PC-9 (cell line): ENCODE measurements at regions of chr12 and their contacts with region 1.

Region 1: GRCh38 chr12:6944381-6945186 is 762 bp downstream of the C12orf57 start:
- DNase-seq: peak; percentile 90 to 97
- H3K4me3 ChIP-seq: peak overlapping the region; percentile 67
- H3K27ac ChIP-seq: peak overlapping the region; percentile 94
- H3K4me1 ChIP-seq: peaks cover 20% of the 10 kb centered on the region
- H3K27me3 ChIP-seq: no peaks in the 10 kb centered on the region
- CTCF ChIP-seq: peak; percentile 88

Region 2: DNA sequence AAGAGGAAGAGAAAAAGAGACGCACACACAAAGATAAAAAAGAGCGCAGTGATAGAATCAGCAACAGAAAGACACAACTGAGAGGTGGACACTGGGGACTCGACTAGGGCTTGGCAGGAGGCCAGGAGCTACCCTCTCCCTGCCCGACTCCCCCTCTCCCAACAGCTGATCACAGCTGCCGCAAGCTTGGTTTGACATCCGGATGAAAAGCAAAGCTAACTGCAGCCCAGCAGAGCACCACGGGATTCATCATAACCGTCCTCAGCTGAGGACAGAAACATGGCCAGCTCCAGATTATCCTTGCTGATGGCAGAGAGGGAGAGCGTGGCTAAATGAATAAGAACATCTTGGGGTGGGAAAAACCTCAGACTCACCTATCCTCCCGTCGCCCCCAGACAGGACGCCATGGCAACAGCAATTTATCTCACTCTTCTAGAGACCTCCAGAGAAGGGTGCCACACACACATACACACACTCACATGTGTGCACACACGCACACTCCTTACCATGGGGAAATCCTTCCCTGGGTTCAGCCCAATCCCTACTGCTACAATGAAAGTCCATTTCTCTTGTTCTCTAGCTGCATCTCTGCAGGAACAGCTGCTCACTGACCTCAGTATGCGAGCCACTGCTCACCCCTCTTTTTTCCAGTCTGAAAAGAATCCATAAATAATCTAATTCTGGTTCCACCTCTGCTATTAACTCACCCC is 1377.4 kb before region 1 on chr12:
- CTCF ChIA-PET with region 1: no interaction called
- POLR2A ChIA-PET with region 1: no interaction called
- intact Hi-C with region 1: no loop called
- DNase-seq: no peak
- H3K4me3 ChIP-seq: no peak overlapping the region
- H3K27ac ChIP-seq: no peak overlapping the region
- H3K4me1 ChIP-seq: no peaks in the 10 kb centered on the region
- H3K27me3 ChIP-seq: peaks cover 92% of the 10 kb centered on the region
- CTCF ChIP-seq: no peak

Region 3: GRCh38 chr12:6851921-6852650 is 92.5 kb before region 1 on chr12 and contains the start of gene USP5:
- CTCF ChIA-PET with region 1: interaction called, 6 read pairs
- POLR2A ChIA-PET with region 1: interaction called, 4 read pairs
- intact Hi-C with region 1: loop called (anchors 1 kb)
- DNase-seq: peak; percentile 99 to 100
- H3K4me3 ChIP-seq: peak within 1 kb of the TSS; percentile 83
- H3K27ac ChIP-seq: peak within 1 kb of the TSS; percentile 69
- H3K4me1 ChIP-seq: peaks cover 25% of the 10 kb centered on the region
- H3K27me3 ChIP-seq: no peaks in the 10 kb centered on the region
- CTCF ChIP-seq: no peak
- total RNA-seq, gene USP5: 267 and 308 TPM in 2 replicates

Region 4: GRCh38 chr12:6914246-6914946 is 30.2 kb before region 1 on chr12 and contains the start of gene ENO2:
- CTCF ChIA-PET with region 1: interaction called, 4 read pairs
- POLR2A ChIA-PET with region 1: interaction called, 14 read pairs
- intact Hi-C with region 1: no loop called
- DNase-seq: peak in 1 of 2 experiments; percentile 75
- H3K4me3 ChIP-seq: peak within 1 kb of the TSS; percentile 77
- H3K27ac ChIP-seq: no peak within 1 kb of the TSS
- H3K4me1 ChIP-seq: peaks cover 5% of the 10 kb centered on the region; the same call in 1 of the 2 replicates
- H3K27me3 ChIP-seq: peaks cover 11% of the 10 kb centered on the region
- CTCF ChIP-seq: no peak
- total RNA-seq, gene ENO2: 38.8 and 56.6 TPM in 2 replicates

Region 5: GRCh38 chr12:6998708-6999451 is 54.3 kb after region 1 on chr12:
- CTCF ChIA-PET with region 1: no interaction called
- POLR2A ChIA-PET with region 1: interaction called, 18 read pairs
- intact Hi-C with region 1: no loop called
- DNase-seq: peak in 1 of 2 experiments; percentile 83
- H3K4me3 ChIP-seq: no peak overlapping the region
- H3K27ac ChIP-seq: peak overlapping the region; percentile 41
- H3K4me1 ChIP-seq: peaks cover 32% of the 10 kb centered on the region
- H3K27me3 ChIP-seq: no peaks in the 10 kb centered on the region
- CTCF ChIP-seq: no peak

Region 6: DNA sequence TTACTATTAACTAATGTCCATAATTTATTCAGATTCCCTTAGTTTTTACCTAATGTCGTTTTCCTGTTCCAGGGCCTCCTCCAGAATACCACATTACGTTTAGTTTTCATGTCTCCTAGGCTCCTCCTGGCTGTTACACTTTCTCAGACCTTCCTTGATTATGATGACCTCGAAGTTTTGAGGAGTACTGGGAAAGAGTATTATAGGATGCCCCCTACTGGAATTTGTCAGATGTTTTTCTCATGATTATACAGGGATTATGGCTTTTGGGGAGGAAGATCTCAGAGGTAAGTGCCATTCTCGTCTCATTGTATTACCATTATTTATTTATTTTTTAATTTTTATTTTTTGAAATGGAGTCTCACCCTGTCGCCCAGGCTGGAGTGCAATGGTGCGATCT is 98.3 kb after region 1 on chr12:
- CTCF ChIA-PET with region 1: interaction called, 4 read pairs
- POLR2A ChIA-PET with region 1: interaction called, 3 read pairs
- intact Hi-C with region 1: loop called (anchors 1 kb)
- DNase-seq: peak in 1 of 2 experiments; percentile 48
- H3K4me3 ChIP-seq: no peak overlapping the region
- H3K27ac ChIP-seq: no peak overlapping the region
- H3K4me1 ChIP-seq: no peaks in the 10 kb centered on the region
- H3K27me3 ChIP-seq: no peaks in the 10 kb centered on the region
- CTCF ChIP-seq: peak; percentile 67

Region 7: DNA sequence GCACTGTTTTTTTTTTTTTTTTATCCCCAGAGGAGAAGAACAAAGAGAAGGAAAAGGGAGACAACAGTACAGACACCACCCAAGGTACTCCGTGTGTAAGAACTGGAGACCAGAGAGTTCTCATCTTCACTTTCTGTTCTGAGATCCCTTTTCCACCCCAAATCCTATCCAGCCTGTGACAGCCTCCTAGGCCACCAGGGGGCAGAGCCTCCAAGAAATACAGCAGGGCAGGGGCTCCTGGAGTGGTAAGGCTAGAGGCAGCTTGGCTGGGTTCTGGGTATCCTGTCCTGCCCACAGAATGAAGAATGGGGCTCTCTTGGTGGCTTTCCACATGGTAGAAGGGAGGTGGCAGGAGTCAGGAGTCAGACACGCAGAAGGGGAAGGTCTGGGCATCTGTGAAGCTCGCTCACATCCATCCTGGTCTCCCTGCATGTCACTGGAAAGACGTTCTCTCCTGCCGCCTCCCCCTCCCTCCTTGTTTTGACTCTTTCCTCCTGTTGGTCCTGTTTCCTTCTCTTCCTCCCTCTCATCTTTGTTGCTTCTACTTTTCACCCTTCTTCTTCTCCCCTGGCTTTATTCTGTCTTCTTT is 197.6 kb after region 1 on chr12:
- CTCF ChIA-PET with region 1: interaction called, 9 read pairs
- POLR2A ChIA-PET with region 1: no interaction called
- intact Hi-C with region 1: loop called (anchors 1 kb)
- DNase-seq: peak; percentile 52 to 61
- H3K4me3 ChIP-seq: no peak overlapping the region
- H3K27ac ChIP-seq: no peak overlapping the region
- H3K4me1 ChIP-seq: no peaks in the 10 kb centered on the region
- H3K27me3 ChIP-seq: no peaks in the 10 kb centered on the region
- CTCF ChIP-seq: peak; percentile 91

Region 8: GRCh38 chr12:7933255-7933729 is 988.7 kb after region 1 on chr12:
- CTCF ChIA-PET with region 1: no interaction called
- POLR2A ChIA-PET with region 1: interaction called, 13 read pairs
- intact Hi-C with region 1: no loop called
- DNase-seq: peak; percentile 79 to 90
- H3K4me3 ChIP-seq: peak overlapping the region; percentile 59
- H3K27ac ChIP-seq: peak overlapping the region; percentile 33; the same call in 1 of the 2 replicates
- H3K4me1 ChIP-seq: peaks cover 44% of the 10 kb centered on the region
- H3K27me3 ChIP-seq: no peaks in the 10 kb centered on the region
- CTCF ChIP-seq: peak; percentile 85